ENCODE measurements at regions of chr9 and their contacts with region 1.

Region 1: GRCh38 chr9:99162759-99163364 is 57.9 kb downstream of the TGFBR1 start:
- DNase-seq: peak in 2 of 4 donors; percentile 31 to 51
- ATAC-seq: peak; percentile 44
- H3K4me3 ChIP-seq: no peak overlapping the region
- H3K27ac ChIP-seq: no peak overlapping the region
- H3K4me1 ChIP-seq: no peaks in the 10 kb centered on the region
- H3K27me3 ChIP-seq: peaks cover 0 to 2% of the 10 kb centered on the region in 2 donors
- CTCF ChIP-seq: peak; percentile 33 to 37

Region 2: DNA sequence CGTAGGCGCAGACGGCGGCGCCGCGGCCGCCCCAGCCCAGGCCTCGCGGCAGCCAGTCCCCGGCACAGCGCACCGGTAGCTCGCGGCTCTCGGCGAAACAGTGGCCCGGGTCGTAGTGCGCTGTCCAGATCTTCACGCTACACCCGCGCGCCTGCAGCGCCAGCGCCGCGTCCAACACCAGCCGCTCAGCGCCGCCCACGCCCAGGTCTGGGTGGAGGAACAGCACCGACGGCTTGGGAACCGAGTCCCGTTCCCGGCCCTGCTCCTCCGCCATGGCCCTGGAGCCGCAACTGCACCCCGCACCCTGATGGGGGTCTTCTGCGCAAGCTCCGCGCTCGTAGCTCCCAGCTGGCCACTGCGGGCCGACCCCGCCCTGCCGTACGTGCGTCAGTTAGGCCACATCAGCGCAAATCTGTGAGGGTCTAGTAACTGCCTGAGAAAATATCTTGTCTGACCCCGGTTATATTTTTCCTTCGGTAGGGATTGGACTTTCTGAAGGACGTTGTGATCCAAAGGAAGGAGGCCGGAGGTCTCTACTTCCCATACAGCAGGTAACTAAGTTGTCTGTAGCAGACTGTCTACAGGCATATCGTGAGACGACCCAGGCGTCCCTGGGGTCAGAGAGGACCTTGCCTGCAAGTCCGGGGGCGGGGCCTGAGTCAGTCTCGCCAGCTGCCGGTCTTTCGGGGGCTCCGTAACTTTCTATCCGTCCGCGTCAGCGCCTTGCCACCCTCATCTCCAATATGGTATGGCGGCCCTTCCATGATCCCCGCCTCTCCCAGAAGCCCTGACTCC is 59.0 kb after region 1 on chr9 and contains the starts of genes ALG2 and SEC61B:
- intact Hi-C with region 1: loop called in 1 of 2 experiments (anchors 10 kb)
- DNase-seq: peak; percentile 94 to 98 (median 98)
- ATAC-seq: peak; percentile 98
- H3K4me3 ChIP-seq: peak within 1 kb of the TSS; percentile 87 to 98
- H3K27ac ChIP-seq: peak within 1 kb of the TSS; percentile 96
- H3K4me1 ChIP-seq: peaks cover 29 to 69% of the 10 kb centered on the region in 2 donors
- H3K27me3 ChIP-seq: no peaks in the 10 kb centered on the region
- CTCF ChIP-seq: peak in 1 of 2 donors; percentile 24
- polyA plus RNA-seq, gene ALG2: 29.8 to 39.5 (median 34.0) TPM
- polyA plus RNA-seq, gene SEC61B: 121 to 161 (median 139) TPM

Region 3: DNA sequence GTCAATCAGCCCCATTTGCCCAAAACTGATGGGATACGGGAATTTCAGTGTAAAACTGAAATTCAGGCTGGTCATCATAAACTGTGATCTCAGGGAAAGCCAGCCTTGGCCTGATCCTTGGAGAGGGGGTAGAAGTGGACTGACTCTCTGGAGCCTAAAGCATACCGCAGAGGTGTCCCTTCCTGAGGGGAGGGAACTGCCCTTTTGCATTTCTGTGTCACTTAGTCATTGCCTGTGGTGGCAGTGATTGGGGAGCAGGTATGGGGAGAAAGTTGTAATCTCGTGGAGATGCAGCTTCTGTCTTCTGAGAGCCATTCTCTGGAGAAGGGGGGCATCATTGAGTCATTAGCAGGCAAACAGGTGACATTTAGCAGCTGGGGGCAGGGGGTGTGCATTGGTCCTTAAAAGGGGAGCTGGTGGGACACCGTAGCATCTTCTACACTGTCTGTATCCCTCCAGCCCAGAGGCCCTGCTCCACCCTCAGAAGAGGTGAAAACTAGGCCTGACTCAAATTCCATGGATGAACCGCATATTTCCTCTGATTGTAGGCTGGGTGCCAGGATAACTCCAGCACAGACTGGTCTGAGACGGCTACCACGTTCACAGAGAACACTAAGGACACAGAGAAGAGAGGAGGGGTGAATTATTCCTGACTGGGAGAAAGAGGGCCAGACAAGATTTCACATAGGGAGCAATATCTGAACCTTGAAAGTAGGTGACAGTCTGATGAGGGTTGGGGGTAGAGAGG is 202.5 kb after region 1 on chr9:
- intact Hi-C with region 1: no loop called
- DNase-seq: no peak
- ATAC-seq: no peak
- H3K4me3 ChIP-seq: no peak overlapping the region
- H3K27ac ChIP-seq: no peak overlapping the region
- H3K4me1 ChIP-seq: peaks cover 0 to 5% of the 10 kb centered on the region in 2 donors
- H3K27me3 ChIP-seq: peaks cover 0 to 51% of the 10 kb centered on the region in 2 donors
- CTCF ChIP-seq: no peak